CD8-positive, alpha-beta T cell (primary cell): ENCODE measurements at regions of chr4 and their contacts with region 1.

Region 1: DNA sequence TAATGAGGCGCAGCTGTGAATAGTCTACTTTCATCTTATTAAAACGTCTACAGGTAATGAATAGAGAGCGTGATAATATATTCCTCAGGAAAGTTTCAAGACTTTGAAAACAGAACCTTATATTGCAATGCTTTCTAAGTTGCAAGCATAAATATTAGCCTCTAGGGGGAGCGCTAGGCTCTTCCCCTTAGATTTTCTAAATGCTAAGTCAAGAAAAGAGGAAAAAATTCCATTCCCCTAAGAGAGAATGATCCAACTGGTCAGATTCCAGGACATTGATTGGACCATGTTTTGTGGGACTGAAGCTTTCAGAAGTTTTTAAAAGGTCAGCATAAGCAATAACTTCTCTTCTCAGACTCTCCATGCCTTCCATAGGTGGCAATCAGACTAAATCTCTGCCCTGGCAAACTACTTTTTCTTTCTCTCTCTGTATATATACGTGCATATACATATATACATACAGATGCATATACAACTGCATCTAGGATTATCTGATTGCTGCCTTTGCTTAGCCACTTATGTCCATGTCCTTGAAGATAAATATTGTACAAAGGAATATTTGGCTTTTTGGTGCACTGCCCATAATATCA is 492.9 kb downstream of the INPP4B start:
- DNase-seq: peak in 2 of 9 experiments; percentile 57 to 70
- ATAC-seq: no peak
- H3K4me3 ChIP-seq: no peak overlapping the region
- H3K4me3 Mint-ChIP-seq: peak overlapping the region; percentile 53
- H3K27ac ChIP-seq: no peak overlapping the region
- H3K27ac Mint-ChIP-seq: peak overlapping the region; percentile 95
- H3K4me1 ChIP-seq: peaks cover 73% of the 10 kb centered on the region
- H3K4me1 Mint-ChIP-seq: peaks cover 95% of the 10 kb centered on the region
- H3K27me3 ChIP-seq: no peaks in the 10 kb centered on the region
- H3K27me3 Mint-ChIP-seq: no peaks in the 10 kb centered on the region
- CTCF ChIP-seq: peak; percentile 96

Region 2: GRCh38 chr4:142126890-142127497 is 226.2 kb before region 1 on chr4:
- CTCF ChIA-PET with region 1: interaction called, 9 read pairs
- POLR2A ChIA-PET with region 1: no interaction called
- intact Hi-C with region 1: loop called (anchors 5 kb)
- DNase-seq: peak; percentile 8 to 77 (median 59)
- ATAC-seq: peak; percentile 66
- H3K4me3 ChIP-seq: no peak overlapping the region
- H3K4me3 Mint-ChIP-seq: no peak overlapping the region
- H3K27ac ChIP-seq: no peak overlapping the region
- H3K27ac Mint-ChIP-seq: no peak overlapping the region
- H3K4me1 ChIP-seq: peaks cover 9% of the 10 kb centered on the region
- H3K4me1 Mint-ChIP-seq: peaks cover 30% of the 10 kb centered on the region
- H3K27me3 ChIP-seq: no peaks in the 10 kb centered on the region
- H3K27me3 Mint-ChIP-seq: no peaks in the 10 kb centered on the region
- CTCF ChIP-seq: peak; percentile 97

Region 3: GRCh38 chr4:142307857-142308256 is 45.4 kb before region 1 on chr4:
- CTCF ChIA-PET with region 1: no interaction called
- POLR2A ChIA-PET with region 1: no interaction called
- intact Hi-C with region 1: no loop called
- DNase-seq: no peak
- ATAC-seq: no peak
- H3K4me3 ChIP-seq: no peak overlapping the region
- H3K4me3 Mint-ChIP-seq: no peak overlapping the region
- H3K27ac ChIP-seq: no peak overlapping the region
- H3K27ac Mint-ChIP-seq: no peak overlapping the region
- H3K4me1 ChIP-seq: no peaks in the 10 kb centered on the region
- H3K4me1 Mint-ChIP-seq: peaks cover 23% of the 10 kb centered on the region
- H3K27me3 ChIP-seq: no peaks in the 10 kb centered on the region
- H3K27me3 Mint-ChIP-seq: no peaks in the 10 kb centered on the region
- CTCF ChIP-seq: no peak

Region 4: DNA sequence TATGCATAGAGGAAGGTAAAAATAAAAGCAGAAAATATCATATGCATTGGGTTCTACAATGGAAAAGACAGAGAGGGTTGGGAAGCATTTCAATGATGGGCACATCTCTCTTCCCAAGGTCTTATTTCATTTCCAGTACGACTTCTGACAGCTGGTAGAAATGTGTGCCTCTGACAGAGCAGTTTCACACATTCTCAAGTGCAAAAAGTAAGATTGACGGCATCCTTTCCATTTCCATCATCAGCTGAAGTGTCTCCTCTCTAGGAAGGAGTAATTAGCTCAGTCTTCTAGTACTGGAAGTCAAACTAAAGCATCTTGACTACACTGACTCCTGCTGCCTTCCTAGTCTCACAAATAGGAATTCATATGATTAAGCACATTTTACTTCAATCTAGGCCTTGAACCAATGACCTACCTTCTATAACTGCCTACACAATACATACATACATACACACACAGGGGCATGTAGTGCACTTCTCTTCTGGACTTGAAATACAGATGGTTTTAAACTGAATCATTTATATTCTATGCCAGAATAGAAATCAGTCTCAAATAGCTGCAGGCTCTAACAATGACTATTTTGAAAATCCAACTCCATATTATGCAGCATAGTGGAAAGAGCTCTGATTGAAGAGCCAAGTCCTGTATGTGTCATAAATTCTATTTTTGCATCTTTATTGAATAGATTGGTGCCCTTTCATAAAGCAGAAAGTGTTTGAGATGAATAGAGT is 19.5 kb after region 1 on chr4:
- CTCF ChIA-PET with region 1: interaction called, 12 read pairs
- POLR2A ChIA-PET with region 1: interaction called, 4 read pairs
- intact Hi-C with region 1: loop called in 1 of 2 experiments (anchors 1 kb)
- DNase-seq: peak in 1 of 9 experiments; percentile 42
- ATAC-seq: peak; percentile 16
- H3K4me3 ChIP-seq: no peak overlapping the region
- H3K4me3 Mint-ChIP-seq: no peak overlapping the region
- H3K27ac ChIP-seq: no peak overlapping the region
- H3K27ac Mint-ChIP-seq: peak overlapping the region; percentile 29
- H3K4me1 ChIP-seq: peaks cover 38% of the 10 kb centered on the region
- H3K4me1 Mint-ChIP-seq: peaks cover 72% of the 10 kb centered on the region
- H3K27me3 ChIP-seq: no peaks in the 10 kb centered on the region
- H3K27me3 Mint-ChIP-seq: no peaks in the 10 kb centered on the region
- CTCF ChIP-seq: no peak

Region 5: GRCh38 chr4:142396279-142396678 is 43.0 kb after region 1 on chr4:
- CTCF ChIA-PET with region 1: no interaction called
- POLR2A ChIA-PET with region 1: no interaction called
- intact Hi-C with region 1: loop called in 1 of 2 experiments (anchors 5 kb)
- DNase-seq: no peak
- ATAC-seq: no peak
- H3K4me3 ChIP-seq: no peak overlapping the region
- H3K4me3 Mint-ChIP-seq: peak overlapping the region; percentile 44
- H3K27ac ChIP-seq: no peak overlapping the region
- H3K27ac Mint-ChIP-seq: peak overlapping the region; percentile 1
- H3K4me1 ChIP-seq: peaks cover 34% of the 10 kb centered on the region
- H3K4me1 Mint-ChIP-seq: peaks cover 72% of the 10 kb centered on the region
- H3K27me3 ChIP-seq: no peaks in the 10 kb centered on the region
- H3K27me3 Mint-ChIP-seq: no peaks in the 10 kb centered on the region
- CTCF ChIP-seq: no peak

Region 6: DNA sequence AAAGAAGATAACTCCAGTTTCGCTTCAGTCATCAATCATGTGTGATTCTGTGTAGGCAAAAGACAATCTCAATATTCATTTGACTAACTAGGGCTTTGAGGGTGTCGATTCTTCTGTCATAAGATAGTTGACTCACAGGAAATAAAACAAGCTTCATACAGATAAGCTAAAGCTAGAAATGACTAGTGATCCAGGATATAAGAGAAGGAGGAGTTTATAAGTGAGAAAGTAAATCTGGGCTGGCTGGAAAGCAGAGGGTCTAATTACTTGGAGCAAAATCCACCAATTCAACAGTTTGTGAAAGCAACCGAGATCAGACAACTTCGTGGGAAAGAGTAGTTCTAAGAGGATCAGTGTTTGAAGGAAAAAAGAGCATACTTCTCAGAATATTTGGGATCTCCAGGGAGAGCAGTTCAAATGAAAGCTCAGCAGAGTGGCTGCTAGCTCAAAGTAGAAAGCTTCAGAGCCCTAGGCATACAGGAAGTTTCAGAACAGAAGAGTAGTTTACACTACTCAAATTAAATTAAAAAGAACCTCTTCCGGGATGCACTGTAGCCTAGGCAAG is 63.5 kb after region 1 on chr4:
- CTCF ChIA-PET with region 1: interaction called, 6 read pairs
- POLR2A ChIA-PET with region 1: interaction called, 5 read pairs
- intact Hi-C with region 1: loop called in 1 of 2 experiments (anchors 2 kb)
- DNase-seq: peak in 2 of 9 experiments; percentile 39 to 64
- ATAC-seq: peak; percentile 91
- H3K4me3 ChIP-seq: no peak overlapping the region
- H3K4me3 Mint-ChIP-seq: peak overlapping the region; percentile 77
- H3K27ac ChIP-seq: peak overlapping the region; percentile 49 to 77
- H3K27ac Mint-ChIP-seq: peak overlapping the region; percentile 95
- H3K4me1 ChIP-seq: peaks cover 26% of the 10 kb centered on the region
- H3K4me1 Mint-ChIP-seq: peaks cover 45% of the 10 kb centered on the region
- H3K27me3 ChIP-seq: no peaks in the 10 kb centered on the region
- H3K27me3 Mint-ChIP-seq: no peaks in the 10 kb centered on the region
- CTCF ChIP-seq: no peak

Region 7: GRCh38 chr4:142567199-142567598 is 214.0 kb after region 1 on chr4:
- CTCF ChIA-PET with region 1: interaction called, 10 read pairs
- POLR2A ChIA-PET with region 1: no interaction called
- intact Hi-C with region 1: loop called (anchors 2 to 5 kb)
- DNase-seq: peak in 8 of 9 experiments; percentile 10 to 78 (median 37)
- ATAC-seq: peak; percentile 70
- H3K4me3 ChIP-seq: peak overlapping the region; percentile 17 to 45
- H3K4me3 Mint-ChIP-seq: peak overlapping the region; percentile 74
- H3K27ac ChIP-seq: peak overlapping the region; percentile 53 to 64
- H3K27ac Mint-ChIP-seq: peak overlapping the region; percentile 84
- H3K4me1 ChIP-seq: peaks cover 10% of the 10 kb centered on the region
- H3K4me1 Mint-ChIP-seq: peaks cover 29% of the 10 kb centered on the region
- H3K27me3 ChIP-seq: no peaks in the 10 kb centered on the region
- H3K27me3 Mint-ChIP-seq: no peaks in the 10 kb centered on the region
- CTCF ChIP-seq: no peak

Region 8: GRCh38 chr4:142846729-142847596 is 493.7 kb after region 1 on chr4:
- CTCF ChIA-PET with region 1: interaction called, 4 read pairs
- POLR2A ChIA-PET with region 1: no interaction called
- intact Hi-C with region 1: loop called (anchors 2 kb)
- DNase-seq: peak; percentile 33 to 78 (median 70)
- ATAC-seq: peak; percentile 83
- H3K4me3 ChIP-seq: peak overlapping the region; percentile 54 to 87
- H3K4me3 Mint-ChIP-seq: peak overlapping the region; percentile 86
- H3K27ac ChIP-seq: no peak overlapping the region
- H3K27ac Mint-ChIP-seq: no peak overlapping the region
- H3K4me1 ChIP-seq: peaks cover 4% of the 10 kb centered on the region
- H3K4me1 Mint-ChIP-seq: peaks cover 13% of the 10 kb centered on the region
- H3K27me3 ChIP-seq: peaks cover 4 to 12% of the 10 kb centered on the region in 2 experiments
- H3K27me3 Mint-ChIP-seq: peaks cover 36% of the 10 kb centered on the region
- CTCF ChIP-seq: peak; percentile 42

Region 9: DNA sequence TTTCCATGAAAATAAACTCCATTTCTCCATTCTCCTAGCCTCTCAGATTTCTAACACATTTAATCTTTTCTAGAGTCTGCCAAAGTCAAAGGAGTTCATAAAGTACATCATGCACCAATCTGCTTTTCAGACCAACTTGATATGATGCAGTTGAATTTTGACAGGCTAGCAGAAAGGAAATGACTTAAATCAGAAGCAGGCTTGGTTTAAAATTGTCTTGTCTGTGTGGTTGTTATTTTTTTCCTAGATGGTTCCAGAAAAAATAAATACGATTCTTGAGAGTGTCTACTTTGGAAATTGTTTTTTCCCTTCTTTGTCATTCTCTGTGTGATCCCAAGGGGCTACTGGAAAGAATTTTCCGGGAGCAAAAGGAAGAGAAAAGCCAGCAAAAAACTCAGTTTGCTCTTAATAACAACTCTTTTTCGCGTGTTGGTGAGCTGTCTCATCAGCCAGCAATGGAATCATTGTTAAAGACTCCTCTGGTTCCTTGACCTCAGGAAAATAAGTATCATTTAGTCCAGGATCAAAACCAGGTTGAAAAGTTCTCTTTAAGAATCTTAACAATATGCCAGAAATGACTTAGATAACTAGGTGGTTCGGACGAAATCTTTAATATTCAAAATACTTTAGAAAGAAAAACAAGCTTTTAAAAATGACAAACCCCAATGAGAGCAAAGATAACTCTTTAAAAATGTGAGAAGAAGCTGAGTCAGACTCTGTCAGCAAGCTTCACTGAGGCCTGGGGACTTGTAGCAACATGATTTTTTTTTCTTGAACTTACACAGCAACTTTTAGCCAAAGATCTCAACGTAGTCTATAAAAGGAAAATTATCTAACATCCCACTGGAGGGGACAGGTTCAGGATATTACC is 933.7 kb after region 1 on chr4:
- CTCF ChIA-PET with region 1: no interaction called
- POLR2A ChIA-PET with region 1: no interaction called
- intact Hi-C with region 1: no loop called
- DNase-seq: no peak
- ATAC-seq: no peak
- H3K4me3 ChIP-seq: no peak overlapping the region
- H3K4me3 Mint-ChIP-seq: no peak overlapping the region
- H3K27ac ChIP-seq: no peak overlapping the region
- H3K27ac Mint-ChIP-seq: no peak overlapping the region
- H3K4me1 ChIP-seq: no peaks in the 10 kb centered on the region
- H3K4me1 Mint-ChIP-seq: no peaks in the 10 kb centered on the region
- H3K27me3 ChIP-seq: no peaks in the 10 kb centered on the region
- H3K27me3 Mint-ChIP-seq: peaks cover 9% of the 10 kb centered on the region
- CTCF ChIP-seq: no peak